ENCODE measurements at regions of chr17 and their contacts with region 1.

Region 1: DNA sequence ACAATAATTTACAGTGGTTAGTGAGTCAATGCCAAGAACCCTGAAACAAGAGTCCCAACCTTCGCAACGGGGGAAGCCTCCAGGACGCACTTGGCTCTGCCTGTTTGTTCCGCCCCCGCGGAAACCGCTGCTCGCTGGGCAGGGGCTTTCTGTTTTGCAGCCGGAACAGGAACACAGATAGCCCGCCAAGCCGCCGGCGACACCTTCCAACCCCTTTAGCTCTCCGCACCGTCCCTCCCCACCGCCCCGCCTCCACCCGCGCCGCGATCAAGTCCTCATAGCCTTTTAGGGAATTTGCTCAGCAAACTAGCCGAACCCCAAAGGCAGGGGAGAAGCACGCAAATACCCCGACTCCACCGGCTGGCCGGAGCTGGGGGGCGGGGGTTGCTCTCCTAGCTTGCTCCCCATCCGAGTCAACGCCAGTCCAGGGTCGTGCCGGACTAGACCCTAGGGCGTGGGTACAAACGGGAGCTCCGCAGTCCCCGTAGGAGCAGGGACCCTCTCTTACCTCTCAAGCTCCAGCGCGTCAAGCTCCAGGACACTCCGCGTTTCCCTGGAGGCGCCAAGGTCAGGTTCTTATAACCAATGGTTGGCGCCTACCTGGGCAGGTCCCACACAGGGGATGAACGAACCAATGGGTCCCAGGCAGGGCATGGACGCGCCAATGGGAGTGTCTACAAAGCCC is at the start of gene SLFN13:
- DNase-seq: peak; percentile 99
- ATAC-seq: peak; percentile 96
- H3K4me3 Mint-ChIP-seq: peak within 1 kb of the TSS; percentile 65
- H3K27ac Mint-ChIP-seq: peak within 1 kb of the TSS; percentile 73
- H3K4me1 Mint-ChIP-seq: peaks cover 24% of the 10 kb centered on the region
- H3K27me3 Mint-ChIP-seq: no peaks in the 10 kb centered on the region
- CTCF ChIP-seq: no peak
- total RNA-seq, gene SLFN13: 39.9 to 41.8 TPM

Region 2: DNA sequence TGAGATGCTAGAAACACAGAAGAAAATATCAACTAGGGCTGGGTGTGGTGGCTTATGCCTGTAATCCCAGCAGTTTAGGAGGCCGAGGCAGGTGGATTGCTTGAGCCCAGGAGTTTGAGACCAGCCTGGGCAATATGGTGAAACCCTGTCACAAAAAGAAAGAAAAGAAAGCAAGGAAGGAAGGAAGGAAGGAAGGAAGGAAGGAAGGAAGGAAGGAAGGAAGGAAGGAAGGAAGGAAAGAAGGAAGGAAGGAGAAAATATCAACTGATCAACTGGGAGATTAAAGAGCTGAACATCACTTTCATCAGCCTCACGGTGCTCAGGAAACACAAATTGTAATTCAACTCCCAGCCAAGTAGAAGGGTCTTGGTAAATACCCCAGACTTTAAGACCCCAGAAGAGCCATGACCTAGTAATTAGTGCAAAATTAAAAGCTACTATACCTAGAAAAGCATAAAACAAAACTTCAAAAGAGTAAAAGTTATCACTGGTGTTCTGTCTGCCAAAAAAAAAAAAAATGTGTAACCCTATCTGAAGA is 28.0 kb after region 1 on chr17:
- CTCF ChIA-PET with region 1: no interaction called
- POLR2A ChIA-PET with region 1: no interaction called
- intact Hi-C with region 1: no loop called
- DNase-seq: no peak
- ATAC-seq: no peak
- H3K4me3 Mint-ChIP-seq: no peak overlapping the region
- H3K27ac Mint-ChIP-seq: peak overlapping the region; percentile 60
- H3K4me1 Mint-ChIP-seq: peaks cover 11% of the 10 kb centered on the region
- H3K27me3 Mint-ChIP-seq: no peaks in the 10 kb centered on the region
- CTCF ChIP-seq: no peak

Region 3: GRCh38 chr17:35529866-35530265 is 81.5 kb after region 1 on chr17:
- CTCF ChIA-PET with region 1: interaction called, 5 read pairs
- POLR2A ChIA-PET with region 1: interaction called, 4 read pairs
- intact Hi-C with region 1: loop called (anchors 5 kb)
- DNase-seq: peak; percentile 17
- ATAC-seq: peak; percentile 42
- H3K4me3 Mint-ChIP-seq: peak overlapping the region; percentile 67
- H3K27ac Mint-ChIP-seq: peak overlapping the region; percentile 83
- H3K4me1 Mint-ChIP-seq: peaks cover 69% of the 10 kb centered on the region
- H3K27me3 Mint-ChIP-seq: no peaks in the 10 kb centered on the region
- CTCF ChIP-seq: no peak

Measured in activated CD8-positive, alpha-beta T cell treated with anti-CD3 and anti-CD28 coated beads for 36 hours (primary cell).